GM18951 (cell line): ENCODE measurements at regions of chr6 and their contacts with region 1.

Region 1: GRCh38 chr6:42030585-42031506 is 19.5 kb upstream of the TAF8 start:
- POLR2A ChIP-seq: no peak

Region 2: GRCh38 chr6:41735427-41736356 is 295.2 kb before region 1 on chr6 and contains the start of gene TFEB:
- in situ Hi-C with region 1: no loop called
- POLR2A ChIP-seq: peak; percentile 49

Region 3: DNA sequence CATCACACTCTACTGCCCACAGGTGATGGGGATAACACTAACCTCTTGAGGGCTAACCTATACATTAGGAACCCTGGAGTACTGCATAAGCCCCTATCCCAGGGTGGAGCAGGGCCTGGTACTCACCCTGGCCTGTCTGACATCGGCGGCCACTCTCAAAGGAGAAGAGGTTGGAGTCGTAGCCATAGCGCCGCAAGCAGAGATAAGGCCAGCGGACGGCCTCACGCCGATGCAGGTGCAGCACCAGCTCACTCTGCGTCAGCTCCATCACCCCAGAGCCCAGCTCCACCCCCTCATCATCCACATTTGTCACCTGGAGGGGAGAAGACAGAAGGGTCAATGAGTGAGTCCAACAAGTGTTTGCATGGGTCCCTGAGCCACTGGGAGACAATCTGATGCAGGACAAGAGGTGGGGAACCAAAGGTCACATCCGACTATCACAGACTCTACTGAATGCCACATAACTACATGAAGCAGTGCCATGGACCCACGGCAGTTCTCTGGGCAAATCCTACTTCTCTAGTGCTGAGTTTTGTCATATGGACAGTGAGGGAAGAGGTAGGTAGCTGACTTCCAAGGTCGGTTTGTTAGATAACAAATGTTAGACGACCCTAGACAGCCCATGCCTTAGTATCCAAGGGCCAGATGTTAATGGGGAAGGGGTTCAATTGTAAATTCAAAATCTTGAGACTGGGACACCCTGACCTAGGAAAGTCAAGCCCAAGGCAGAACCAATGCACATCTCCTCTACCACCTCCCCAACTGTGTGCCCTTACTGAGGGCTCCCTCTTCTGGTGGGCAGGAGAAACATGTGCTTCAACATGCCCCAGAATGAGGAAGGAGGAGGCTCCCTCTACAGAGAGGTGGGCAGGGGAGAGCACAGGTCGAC is 255.3 kb before region 1 on chr6:
- in situ Hi-C with region 1: no loop called
- POLR2A ChIP-seq: no peak

Region 4: DNA sequence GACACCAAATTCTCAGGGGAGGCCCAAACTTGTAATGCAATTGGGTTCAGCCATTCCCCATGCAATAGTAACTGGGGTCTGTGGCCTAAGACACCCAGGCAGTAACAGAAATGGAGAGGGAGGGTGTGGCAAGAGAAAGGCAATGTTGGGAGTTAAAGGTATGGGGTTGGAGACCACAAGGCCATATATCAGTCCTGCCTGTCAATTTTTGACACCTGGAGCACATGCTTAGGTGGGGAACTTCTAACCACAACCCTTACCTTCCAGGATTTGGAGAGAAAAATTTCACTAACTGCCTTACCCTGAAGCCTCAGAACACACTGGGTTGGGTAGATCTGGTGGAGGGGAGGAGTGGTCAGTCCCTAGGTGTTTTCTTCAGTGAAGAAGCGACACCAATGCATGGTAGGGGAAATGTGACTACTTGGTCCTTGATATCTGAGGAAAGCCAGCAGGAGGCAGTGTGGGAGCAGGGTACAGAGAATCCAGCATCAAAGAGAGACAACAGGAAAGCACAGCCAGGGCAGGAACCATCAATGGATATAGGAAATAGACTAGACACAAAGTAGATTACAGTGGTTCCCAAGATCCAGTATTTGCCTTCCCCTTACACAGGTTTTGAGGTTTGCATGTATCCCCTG is 128.8 kb before region 1 on chr6:
- in situ Hi-C with region 1: loop called (anchors 10 kb)
- POLR2A ChIP-seq: no peak

Region 5: GRCh38 chr6:42086046-42087035 is 55.5 kb after region 1 on chr6:
- in situ Hi-C with region 1: no loop called
- POLR2A ChIP-seq: no peak

Region 6: DNA sequence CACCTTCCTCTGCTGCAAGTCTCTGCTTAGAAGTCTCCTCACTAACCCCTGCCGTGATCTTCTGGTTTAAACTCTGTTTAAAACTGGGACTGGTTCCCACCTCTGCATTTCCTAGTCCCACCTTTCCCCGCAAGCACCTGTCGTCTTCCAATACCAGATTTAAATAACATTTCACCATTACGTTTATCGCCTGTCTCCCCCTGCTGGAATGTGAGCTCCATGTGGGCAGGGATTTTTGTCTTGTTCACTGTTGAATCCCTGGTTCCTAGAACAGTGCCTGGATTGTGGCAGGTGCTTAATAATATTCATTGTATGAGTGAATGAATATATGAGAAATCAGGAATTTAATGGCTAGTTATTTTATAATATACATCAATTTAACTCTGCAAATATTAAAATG is 145.0 kb after region 1 on chr6:
- in situ Hi-C with region 1: no loop called
- POLR2A ChIP-seq: no peak